ENCODE measurements at regions of chr17 and their contacts with region 1.

Region 1: GRCh38 chr17:43018008-43018853 is 4.0 kb downstream of the VAT1 start:
- DNase-seq: peak; percentile 35
- H3K4me3 Mint-ChIP-seq: no peak overlapping the region
- H3K27ac Mint-ChIP-seq: no peak overlapping the region
- H3K4me1 Mint-ChIP-seq: peaks cover 26% of the 10 kb centered on the region
- H3K27me3 Mint-ChIP-seq: peaks cover 4% of the 10 kb centered on the region

Region 2: DNA sequence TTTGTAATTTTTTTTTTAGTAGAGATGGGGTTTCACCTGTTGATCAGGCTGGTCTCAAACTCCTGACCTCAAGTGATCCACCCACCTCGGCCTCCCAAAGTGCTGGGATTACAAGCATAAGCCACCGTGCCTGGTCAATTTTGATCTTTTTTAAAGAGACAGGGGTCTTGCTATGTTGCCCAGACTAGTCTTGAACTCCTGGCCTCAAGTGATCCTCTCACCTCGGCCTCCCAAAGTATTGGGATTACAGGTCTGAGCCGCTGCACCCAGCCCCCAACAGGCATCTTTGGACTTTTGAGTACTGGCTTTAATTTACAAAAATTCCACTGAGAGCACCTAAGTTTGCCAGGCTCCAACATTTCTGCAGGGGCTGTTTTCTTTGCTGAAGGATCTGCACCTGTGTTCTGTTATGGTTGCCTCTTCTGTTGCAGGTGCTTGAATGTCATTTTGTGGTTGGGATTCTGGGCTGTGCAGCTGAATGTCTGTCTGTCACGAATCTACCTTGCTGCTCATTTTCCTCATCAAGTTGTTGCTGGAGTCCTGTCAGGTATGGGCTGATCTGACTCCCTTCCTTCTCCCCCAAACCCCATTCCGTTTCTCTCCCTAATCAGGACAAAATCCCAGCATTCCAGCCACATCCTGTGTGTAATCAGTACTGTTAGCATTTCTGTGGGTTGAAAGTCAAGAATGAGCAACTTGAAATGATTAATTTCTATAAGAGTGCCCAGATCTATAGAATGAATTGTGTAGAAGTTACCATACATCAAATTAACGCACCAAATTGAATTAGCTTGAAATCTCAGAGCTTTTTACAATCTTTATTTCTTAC is 109.1 kb before region 1 on chr17:
- CTCF ChIA-PET with region 1: no interaction called
- POLR2A ChIA-PET with region 1: no interaction called
- DNase-seq: no peak
- H3K4me3 Mint-ChIP-seq: no peak overlapping the region
- H3K27ac Mint-ChIP-seq: no peak overlapping the region
- H3K4me1 Mint-ChIP-seq: no peaks in the 10 kb centered on the region
- H3K27me3 Mint-ChIP-seq: peaks cover 19% of the 10 kb centered on the region

Region 3: DNA sequence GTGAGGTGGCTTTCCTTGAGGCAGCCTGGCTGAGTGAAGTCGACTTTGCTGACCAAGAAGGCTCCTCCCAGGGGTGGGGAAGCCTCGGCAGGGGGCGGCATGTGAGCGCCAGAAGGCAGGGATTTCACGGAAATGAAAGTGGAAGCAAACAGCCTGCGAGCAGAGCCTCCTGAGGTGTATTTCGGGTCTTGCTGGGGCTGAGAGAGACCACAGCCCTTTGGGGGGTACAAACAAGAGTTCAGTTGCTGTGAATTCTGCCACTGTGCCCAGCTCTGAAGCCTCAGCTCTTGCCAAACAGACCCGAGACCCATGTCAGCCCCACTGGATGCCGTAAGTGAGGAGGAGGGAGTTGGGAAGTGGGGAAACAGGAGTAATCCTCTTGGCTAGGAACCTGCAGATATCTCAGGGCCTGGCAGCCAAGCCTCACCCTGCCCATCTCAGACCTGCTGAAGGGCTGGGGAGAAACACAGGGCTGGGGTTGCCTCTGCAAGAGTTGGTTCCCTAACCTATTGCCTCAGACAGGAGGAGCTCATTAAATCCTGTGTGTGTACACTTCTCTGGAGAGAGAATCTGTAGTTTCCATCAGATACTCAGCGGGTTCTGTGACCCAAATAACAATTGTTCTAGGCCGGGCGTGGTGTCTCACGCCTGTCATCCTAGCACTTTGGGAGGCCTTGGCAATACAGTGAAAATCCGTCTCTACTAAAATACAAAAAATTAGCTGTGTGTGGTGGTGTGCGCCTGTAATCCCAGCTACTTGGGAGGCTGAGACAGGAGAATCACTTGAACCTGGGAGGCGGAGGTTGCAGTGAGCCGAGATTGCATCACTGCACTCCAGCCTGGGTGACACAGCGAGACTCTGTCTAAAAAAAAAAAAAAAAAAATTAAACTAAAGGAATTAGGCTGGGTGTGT is 11.3 kb before region 1 on chr17 and contains the start of gene IFI35:
- CTCF ChIA-PET with region 1: interaction called, 6 read pairs
- POLR2A ChIA-PET with region 1: interaction called, 14 read pairs
- DNase-seq: peak; percentile 92
- H3K4me3 Mint-ChIP-seq: peak within 1 kb of the TSS; percentile 100
- H3K27ac Mint-ChIP-seq: peak within 1 kb of the TSS; percentile 100
- H3K4me1 Mint-ChIP-seq: peaks cover 34% of the 10 kb centered on the region
- H3K27me3 Mint-ChIP-seq: no peaks in the 10 kb centered on the region
- total RNA-seq, gene IFI35: 149 to 154 TPM

Region 4: GRCh38 chr17:43324205-43324893 is 306.1 kb after region 1 on chr17:
- CTCF ChIA-PET with region 1: no interaction called
- POLR2A ChIA-PET with region 1: no interaction called
- DNase-seq: no peak
- H3K4me3 Mint-ChIP-seq: no peak overlapping the region
- H3K27ac Mint-ChIP-seq: no peak overlapping the region
- H3K4me1 Mint-ChIP-seq: no peaks in the 10 kb centered on the region
- H3K27me3 Mint-ChIP-seq: peaks cover 27% of the 10 kb centered on the region

Measured in activated CD4-positive, alpha-beta memory T cell treated with anti-CD3 and anti-CD28 coated beads, Interleukin-2, amount 10 ng/mL, durations not matched to agents 7 days and 5 days (primary cell).